ENCODE measurements at regions of chr18 and their contacts with region 1.

Region 1: GRCh38 chr18:74489676-74490075 is 6.5 kb upstream of the CNDP2 start:
- DNase-seq: no peak
- ATAC-seq: no peak

Region 2: GRCh38 chr18:74204526-74205152 is 285.0 kb before region 1 on chr18:
- intact Hi-C with region 1: loop called (anchors 10 kb)
- DNase-seq: no peak
- ATAC-seq: no peak

Region 3: GRCh38 chr18:74353169-74353775 is 136.4 kb before region 1 on chr18:
- intact Hi-C with region 1: loop called (anchors 5 kb)
- DNase-seq: peak; percentile 74
- ATAC-seq: peak; percentile 95

Measured in sciatic nerve (tissue), 2 donors.